ENCODE measurements at regions of chr19 and their contacts with region 1.

Region 1: DNA sequence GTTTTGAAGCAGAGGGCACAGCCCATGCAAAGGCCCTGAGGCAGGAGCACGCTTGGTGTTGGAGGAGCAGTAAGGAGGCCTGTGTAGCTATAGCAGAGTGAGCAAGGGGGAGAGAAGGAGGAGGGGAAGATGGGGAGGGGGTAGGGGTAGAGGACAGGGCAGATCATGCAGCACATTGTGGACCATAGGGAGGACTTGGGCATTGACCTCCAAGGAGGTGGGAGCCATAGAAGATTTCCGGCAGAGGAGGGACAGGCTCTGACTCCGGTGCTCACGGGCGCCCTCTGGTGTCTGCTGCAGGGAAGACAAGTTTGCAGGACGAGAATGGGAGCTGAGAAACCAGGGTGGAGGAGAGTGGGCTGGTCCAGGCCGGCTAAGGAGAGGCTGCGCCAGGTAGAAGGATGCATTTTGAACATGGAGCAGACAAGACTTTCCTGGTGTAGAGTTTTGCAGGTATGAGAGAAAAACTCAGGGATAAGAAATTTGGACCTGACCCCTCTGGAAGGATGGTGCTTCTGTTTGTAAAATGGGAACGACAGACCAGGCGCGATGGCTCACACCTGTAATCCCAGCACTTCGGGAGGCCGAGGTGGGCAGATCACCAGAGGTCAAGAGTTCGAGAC is 13.7 kb upstream of the CREB3L3 start:
- DNase-seq: peak; percentile 63
- H3K4me3 ChIP-seq: no peak overlapping the region
- H3K27ac ChIP-seq: no peak overlapping the region
- H3K4me1 ChIP-seq: no peaks in the 10 kb centered on the region
- H3K27me3 ChIP-seq: peaks cover 0 to under 1% of the 10 kb centered on the region in 2 experiments
- CTCF ChIP-seq: peak; percentile 90
- POLR2A ChIP-seq: no peak

Region 2: DNA sequence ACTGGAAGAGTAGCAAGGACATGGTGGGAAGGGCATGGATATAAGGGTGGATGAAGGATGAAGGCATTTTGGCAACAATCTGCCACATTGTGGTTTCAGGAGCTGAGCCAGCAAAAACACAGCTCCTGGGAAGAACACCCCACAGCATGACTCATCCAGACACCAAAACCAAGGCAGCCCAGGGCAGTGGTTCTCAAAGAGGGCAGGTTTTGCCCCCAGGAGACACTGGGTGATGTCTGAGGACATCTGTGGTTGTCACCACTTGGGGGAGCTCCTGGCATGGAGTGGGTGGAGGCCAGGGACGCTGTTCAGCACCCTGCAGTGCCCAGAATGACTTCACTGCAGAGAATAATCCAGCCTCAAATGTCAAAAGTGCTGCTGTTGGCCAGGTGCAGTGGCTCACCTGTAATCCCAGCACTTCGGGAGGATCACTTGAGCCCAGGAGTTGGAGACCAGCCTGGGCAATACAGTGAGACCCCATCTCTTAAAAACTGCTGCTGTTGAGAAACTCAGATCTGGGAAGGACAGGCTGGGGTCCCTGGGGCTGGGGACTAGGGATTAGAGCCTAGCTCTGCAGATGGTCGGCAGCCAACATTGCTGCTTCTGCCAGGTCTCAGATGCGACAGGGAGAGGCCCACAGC is 287.0 kb before region 1 on chr19:
- CTCF ChIA-PET with region 1: interaction called, 20 read pairs
- POLR2A ChIA-PET with region 1: no interaction called
- dilution Hi-C with region 1: no loop called
- intact Hi-C with region 1: no loop called
- DNase-seq: peak; percentile 30
- H3K4me3 ChIP-seq: no peak overlapping the region
- H3K27ac ChIP-seq: no peak overlapping the region
- H3K4me1 ChIP-seq: no peaks in the 10 kb centered on the region
- H3K27me3 ChIP-seq: no peaks in the 10 kb centered on the region
- CTCF ChIP-seq: peak; percentile 29 to 53
- POLR2A ChIP-seq: no peak

Region 3: GRCh38 chr19:4065430-4066175 is 74.1 kb before region 1 on chr19:
- CTCF ChIA-PET with region 1: interaction called, 9 read pairs
- POLR2A ChIA-PET with region 1: no interaction called
- dilution Hi-C with region 1: no loop called
- intact Hi-C with region 1: loop called (anchors 2 kb)
- DNase-seq: peak; percentile 94
- H3K4me3 ChIP-seq: peak overlapping the region in 1 of 3 experiments; percentile 98
- H3K27ac ChIP-seq: no peak overlapping the region
- H3K4me1 ChIP-seq: peaks cover 11% of the 10 kb centered on the region
- H3K27me3 ChIP-seq: no peaks in the 10 kb centered on the region
- CTCF ChIP-seq: no peak
- POLR2A ChIP-seq: peak; percentile 11

Region 4: DNA sequence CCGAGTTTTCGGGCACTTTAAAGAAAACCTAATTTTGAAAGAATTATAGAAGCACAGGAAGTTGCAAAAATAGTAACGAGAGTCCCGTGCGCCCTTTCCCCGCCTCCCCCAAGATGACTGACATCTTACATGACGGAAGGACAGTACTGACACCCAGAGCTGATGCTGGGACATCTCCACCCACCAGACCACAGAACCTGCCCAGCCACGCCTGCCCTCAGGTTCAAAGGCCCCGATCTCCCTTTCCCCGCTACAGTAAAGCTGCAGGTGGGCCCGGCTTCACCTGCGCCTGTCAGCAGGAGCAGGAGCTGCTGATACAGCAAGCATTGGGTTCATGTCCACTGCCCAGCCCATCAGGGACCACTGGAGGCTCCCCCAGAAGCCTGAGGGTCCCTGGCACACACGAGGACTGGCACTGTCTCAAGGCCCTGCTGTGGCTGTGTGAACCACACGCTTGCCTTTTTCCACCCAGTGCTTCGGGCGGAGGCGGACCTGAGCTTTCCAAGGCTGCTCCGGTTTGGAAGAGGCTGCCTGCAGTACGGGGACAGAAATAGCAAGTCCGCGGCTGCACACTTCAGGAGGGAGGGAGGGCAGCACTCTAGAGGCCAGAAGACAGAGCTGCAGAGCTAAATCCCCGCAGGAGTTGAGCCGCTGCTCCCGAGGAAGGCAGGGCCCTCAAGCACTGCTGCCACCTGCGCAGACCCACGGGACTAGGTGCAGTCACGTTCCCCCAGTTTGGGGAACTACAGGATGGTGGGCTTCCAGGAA is 24.5 kb before region 1 on chr19:
- CTCF ChIA-PET with region 1: interaction called, 19 read pairs
- POLR2A ChIA-PET with region 1: no interaction called
- dilution Hi-C with region 1: no loop called
- intact Hi-C with region 1: no loop called
- DNase-seq: no peak
- H3K4me3 ChIP-seq: no peak overlapping the region
- H3K27ac ChIP-seq: no peak overlapping the region
- H3K4me1 ChIP-seq: no peaks in the 10 kb centered on the region
- H3K27me3 ChIP-seq: no peaks in the 10 kb centered on the region
- CTCF ChIP-seq: no peak
- POLR2A ChIP-seq: no peak

Region 5: GRCh38 chr19:4164262-4164661 is 24.5 kb after region 1 on chr19:
- CTCF ChIA-PET with region 1: interaction called, 20 read pairs
- POLR2A ChIA-PET with region 1: no interaction called
- dilution Hi-C with region 1: no loop called
- intact Hi-C with region 1: no loop called
- DNase-seq: no peak
- H3K4me3 ChIP-seq: no peak overlapping the region
- H3K27ac ChIP-seq: no peak overlapping the region
- H3K4me1 ChIP-seq: no peaks in the 10 kb centered on the region
- H3K27me3 ChIP-seq: no peaks in the 10 kb centered on the region
- CTCF ChIP-seq: no peak
- POLR2A ChIP-seq: no peak

Region 6: DNA sequence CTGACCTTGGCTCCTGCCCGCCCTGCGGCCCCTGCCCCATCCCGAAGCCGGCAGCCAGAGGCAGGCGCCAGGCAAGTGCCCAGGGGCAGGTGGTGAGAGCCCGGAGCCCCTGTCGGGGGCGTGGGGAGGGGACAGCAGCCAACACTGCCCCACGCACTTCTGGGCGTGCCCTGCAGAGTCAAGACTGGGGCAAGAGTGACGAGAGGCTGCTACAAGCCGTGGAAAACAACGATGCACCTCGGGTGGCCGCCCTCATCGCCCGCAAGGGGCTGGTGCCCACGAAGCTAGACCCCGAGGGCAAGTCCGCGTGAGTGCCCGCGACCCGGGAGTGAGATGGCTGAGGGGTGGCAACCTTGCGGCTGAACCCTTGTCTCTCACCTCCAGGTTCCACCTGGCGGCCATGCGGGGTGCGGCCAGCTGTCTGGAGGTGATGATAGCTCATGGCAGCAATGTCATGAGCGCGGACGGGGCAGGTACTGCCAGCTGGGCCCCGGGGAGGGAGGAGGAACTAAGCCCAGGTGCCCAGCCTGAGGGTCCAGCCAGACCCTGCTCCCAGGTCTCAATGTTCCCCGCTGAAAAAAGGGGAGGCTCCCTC is 60.1 kb after region 1 on chr19:
- CTCF ChIA-PET with region 1: interaction called, 36 read pairs
- POLR2A ChIA-PET with region 1: no interaction called
- dilution Hi-C with region 1: no loop called
- intact Hi-C with region 1: loop called (anchors 1 kb)
- DNase-seq: no peak
- H3K4me3 ChIP-seq: no peak overlapping the region
- H3K27ac ChIP-seq: no peak overlapping the region
- H3K4me1 ChIP-seq: no peaks in the 10 kb centered on the region
- H3K27me3 ChIP-seq: peaks cover 6 to 12% of the 10 kb centered on the region in 2 experiments
- CTCF ChIP-seq: no peak
- POLR2A ChIP-seq: no peak

Region 7: GRCh38 chr19:4284176-4284958 is 144.6 kb after region 1 on chr19:
- CTCF ChIA-PET with region 1: no interaction called
- POLR2A ChIA-PET with region 1: no interaction called
- dilution Hi-C with region 1: no loop called
- intact Hi-C with region 1: no loop called
- DNase-seq: no peak
- H3K4me3 ChIP-seq: no peak overlapping the region
- H3K27ac ChIP-seq: no peak overlapping the region
- H3K4me1 ChIP-seq: no peaks in the 10 kb centered on the region
- H3K27me3 ChIP-seq: peaks cover 11 to 13% of the 10 kb centered on the region in 2 experiments
- CTCF ChIP-seq: no peak
- POLR2A ChIP-seq: no peak